Heart right ventricle (tissue), 16 donors: ENCODE measurements at regions of chr10 and their contacts with region 1.

Region 1: GRCh38 chr10:17737027-17737965 is 14.7 kb upstream of the TMEM236 start:
- DNase-seq: peak; percentile 29 to 53
- ATAC-seq: peak in 7 of 8 donors; percentile 29 to 59 (median 43)
- H3K4me3 ChIP-seq: no peak overlapping the region
- H3K27ac ChIP-seq: peak overlapping the region in 7 of 10 donors; percentile 11 to 78 (median 29)
- H3K4me1 ChIP-seq: peaks cover 4 to 35% (median 19%) of the 10 kb centered on the region in 9 donors
- H3K27me3 ChIP-seq: no peaks in the 10 kb centered on the region
- CTCF ChIP-seq: peak; percentile 23 to 77 (median 67)

Region 2: DNA sequence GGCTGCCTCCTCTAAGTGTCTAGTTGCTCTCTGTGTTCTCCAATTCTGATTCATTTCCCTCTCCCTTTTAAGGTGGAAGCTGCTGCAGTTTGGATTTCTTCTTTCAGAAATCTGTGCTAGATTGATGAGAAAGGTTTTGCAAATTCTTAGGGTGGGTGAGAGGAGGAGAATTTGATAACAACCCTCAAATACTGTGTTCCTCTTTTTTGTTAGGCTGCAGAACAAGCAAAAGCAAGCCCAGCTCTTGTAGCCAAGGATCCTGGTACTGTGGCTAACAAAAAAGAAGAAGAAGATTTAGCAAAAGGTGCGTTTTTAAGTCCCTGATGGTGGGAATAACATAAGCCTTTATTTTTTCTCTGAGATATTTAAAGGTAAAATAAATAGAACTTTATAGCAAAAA is 44.3 kb before region 1 on chr10:
- intact Hi-C with region 1: no loop called
- DNase-seq: no peak
- ATAC-seq: peak in 1 of 8 donors; percentile 30
- H3K4me3 ChIP-seq: no peak overlapping the region
- H3K27ac ChIP-seq: no peak overlapping the region
- H3K4me1 ChIP-seq: peaks cover 0 to 14% (median 8%) of the 10 kb centered on the region in 9 donors
- H3K27me3 ChIP-seq: no peaks in the 10 kb centered on the region
- CTCF ChIP-seq: no peak

Region 3: GRCh38 chr10:17725703-17726102 is 11.6 kb before region 1 on chr10:
- intact Hi-C with region 1: no loop called
- DNase-seq: no peak
- ATAC-seq: no peak
- H3K4me3 ChIP-seq: no peak overlapping the region
- H3K27ac ChIP-seq: no peak overlapping the region
- H3K4me1 ChIP-seq: peaks cover 0 to 5% (median 0%) of the 10 kb centered on the region in 9 donors
- H3K27me3 ChIP-seq: no peaks in the 10 kb centered on the region
- CTCF ChIP-seq: no peak

Region 4: DNA sequence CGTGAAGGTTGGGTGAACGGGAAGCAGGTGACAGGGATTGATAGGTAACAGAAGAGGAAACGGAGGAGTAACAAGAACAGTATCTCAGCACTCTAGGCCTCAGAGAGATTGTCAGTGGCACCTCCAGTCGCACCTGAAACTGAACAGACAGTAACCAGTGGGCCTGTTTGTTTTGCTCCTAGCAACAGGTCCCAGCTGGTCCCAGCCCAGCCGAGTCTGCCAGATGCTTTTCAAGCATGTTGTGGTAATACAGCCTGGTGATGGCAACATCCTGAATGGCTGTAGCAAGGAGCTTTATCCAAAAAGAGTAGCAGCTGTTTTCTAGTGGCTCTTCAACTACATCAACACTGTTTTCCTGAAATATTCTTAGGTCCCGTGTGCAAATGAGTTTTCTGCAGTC is 407.6 kb after region 1 on chr10:
- intact Hi-C with region 1: no loop called
- DNase-seq: peak; percentile 57 to 76
- ATAC-seq: peak; percentile 53 to 92 (median 82)
- H3K4me3 ChIP-seq: no peak overlapping the region
- H3K27ac ChIP-seq: peak overlapping the region in 6 of 10 donors; percentile 6 to 70 (median 58)
- H3K4me1 ChIP-seq: peaks cover 0 to 27% (median 15%) of the 10 kb centered on the region in 9 donors
- H3K27me3 ChIP-seq: peaks cover 0 to 26% (median 8%) of the 10 kb centered on the region in 7 donors
- CTCF ChIP-seq: no peak

Region 5: GRCh38 chr10:18214691-18215563 is 477.6 kb after region 1 on chr10:
- intact Hi-C with region 1: loop called in 2 of 10 experiments (anchors 10 kb)
- DNase-seq: peak in 1 of 2 donors; percentile 38
- ATAC-seq: peak; percentile 63 to 77 (median 70)
- H3K4me3 ChIP-seq: no peak overlapping the region
- H3K27ac ChIP-seq: no peak overlapping the region
- H3K4me1 ChIP-seq: peaks cover 0 to 35% (median 13%) of the 10 kb centered on the region in 9 donors
- H3K27me3 ChIP-seq: no peaks in the 10 kb centered on the region
- CTCF ChIP-seq: peak; percentile 56 to 91 (median 76)